ENCODE measurements at regions of chr9 and their contacts with region 1.

Region 1: DNA sequence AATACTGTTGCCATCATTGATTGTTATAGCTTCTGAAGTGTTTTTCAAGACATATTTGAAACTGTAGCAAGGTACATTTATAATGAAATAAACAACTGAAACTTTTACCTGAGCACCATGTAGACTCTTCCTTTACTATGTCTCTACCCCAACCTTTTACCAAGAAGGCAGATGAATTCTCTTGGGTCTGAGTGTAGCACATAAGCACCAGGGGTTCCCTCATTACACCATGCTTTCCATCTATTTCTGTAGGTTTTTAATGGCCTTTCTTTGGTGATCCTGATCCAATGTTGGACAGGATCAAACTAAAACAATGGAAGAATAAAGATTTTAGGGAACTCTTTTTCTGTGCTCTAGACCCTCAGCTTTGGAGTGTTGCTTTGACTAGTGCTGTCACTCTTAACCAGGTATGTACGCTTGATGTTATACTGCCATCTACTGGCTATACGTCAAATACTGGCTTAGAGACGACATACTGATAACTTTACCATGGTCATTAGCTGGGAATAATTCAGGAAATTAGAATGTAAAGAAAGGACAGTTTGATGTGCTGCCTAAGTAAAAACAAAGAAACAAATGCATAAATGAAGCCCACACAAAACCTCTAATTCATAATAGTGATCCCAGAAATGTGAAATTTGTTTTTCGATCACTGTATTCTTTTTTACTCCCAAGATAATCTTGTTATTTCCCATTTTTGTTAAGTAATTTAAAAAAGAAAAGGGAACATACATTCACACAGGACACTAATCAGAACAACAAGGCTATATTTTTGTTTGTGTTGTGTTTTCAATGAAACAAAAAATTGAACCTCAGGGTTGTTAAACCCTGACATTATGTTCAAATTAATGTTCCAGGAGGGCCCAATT is 30.7 kb downstream of the IFNW1 start:
- DNase-seq: no peak
- H3K4me3 ChIP-seq: no peak overlapping the region
- H3K27ac ChIP-seq: no peak overlapping the region
- H3K4me1 ChIP-seq: no peaks in the 10 kb centered on the region
- H3K27me3 ChIP-seq: no peaks in the 10 kb centered on the region
- CTCF ChIP-seq: peak; percentile 68 to 85 (median 80)

Region 2: GRCh38 chr9:19925817-19926503 is 1185.0 kb before region 1 on chr9:
- intact Hi-C with region 1: loop called (anchors 5 kb)
- DNase-seq: peak in 1 of 2 donors; percentile 74
- H3K4me3 ChIP-seq: peak overlapping the region; percentile 42 to 54
- H3K27ac ChIP-seq: no peak overlapping the region
- H3K4me1 ChIP-seq: no peaks in the 10 kb centered on the region
- H3K27me3 ChIP-seq: no peaks in the 10 kb centered on the region
- CTCF ChIP-seq: peak; percentile 76 to 97 (median 90)

Region 3: DNA sequence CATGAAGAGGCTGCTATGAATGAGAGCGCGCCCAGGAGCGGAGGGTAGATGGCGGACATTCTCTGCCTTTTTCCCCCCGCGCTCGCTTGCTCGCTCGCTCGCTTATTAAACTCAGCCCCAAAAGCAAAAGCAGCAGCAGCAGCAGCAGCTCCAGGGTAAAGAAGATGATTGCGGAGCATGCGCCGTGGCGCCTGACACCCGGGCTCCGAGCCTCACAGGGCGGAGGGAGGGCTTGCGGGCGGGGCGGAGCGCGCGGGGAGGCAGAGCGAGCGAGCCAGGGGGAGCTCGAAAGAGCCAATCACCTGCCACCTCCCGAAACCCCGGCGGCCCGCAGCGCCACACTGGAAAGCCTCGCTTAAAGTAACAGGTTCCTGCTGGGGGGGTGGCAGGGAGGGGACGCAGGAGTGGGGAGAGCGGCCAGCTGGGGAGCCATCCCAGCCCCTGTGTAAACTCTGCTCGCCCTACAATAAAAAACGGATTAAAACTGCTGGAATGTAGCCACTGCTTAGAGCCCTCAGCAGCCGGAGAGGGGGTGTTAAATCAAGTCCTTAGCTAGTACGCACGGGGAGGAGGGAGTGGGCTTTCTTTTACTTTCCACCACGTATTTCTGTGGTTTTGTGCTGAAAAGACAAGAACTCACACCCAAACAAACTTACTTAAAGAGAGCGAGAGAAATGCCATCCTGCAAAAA is 488.5 kb before region 1 on chr9 and contains the start of gene MLLT3:
- intact Hi-C with region 1: loop called (anchors 5 kb)
- DNase-seq: peak; percentile 82 to 98
- H3K4me3 ChIP-seq: peak within 1 kb of the TSS; percentile 89
- H3K27ac ChIP-seq: peak within 1 kb of the TSS; percentile 69 to 91
- H3K4me1 ChIP-seq: peaks cover 3 to 8% of the 10 kb centered on the region in 2 donors
- H3K27me3 ChIP-seq: no peaks in the 10 kb centered on the region
- CTCF ChIP-seq: no peak
- total RNA-seq, gene MLLT3: 16.8 TPM

Region 4: GRCh38 chr9:20884985-20885593 is 225.9 kb before region 1 on chr9:
- intact Hi-C with region 1: loop called (anchors 1 kb)
- DNase-seq: peak in 1 of 2 donors; percentile 70
- H3K4me3 ChIP-seq: no peak overlapping the region
- H3K27ac ChIP-seq: no peak overlapping the region
- H3K4me1 ChIP-seq: no peaks in the 10 kb centered on the region
- H3K27me3 ChIP-seq: no peaks in the 10 kb centered on the region
- CTCF ChIP-seq: peak; percentile 24 to 64 (median 52)

Region 5: GRCh38 chr9:20941174-20941690 is 169.7 kb before region 1 on chr9:
- intact Hi-C with region 1: loop called (anchors 5 kb)
- DNase-seq: peak in 1 of 2 donors; percentile 68
- H3K4me3 ChIP-seq: no peak overlapping the region
- H3K27ac ChIP-seq: no peak overlapping the region
- H3K4me1 ChIP-seq: no peaks in the 10 kb centered on the region
- H3K27me3 ChIP-seq: no peaks in the 10 kb centered on the region
- CTCF ChIP-seq: peak; percentile 48 to 89 (median 76)

Measured in ascending aorta (tissue), 2 donors.